B cell (primary cell): ENCODE measurements at regions of chr1 and their contacts with region 1.

Region 1: GRCh38 chr1:12153181-12153785 is 13.5 kb upstream of the TNFRSF1B start:
- DNase-seq: peak; percentile 89
- ATAC-seq: peak; percentile 48
- H3K4me3 ChIP-seq: peak overlapping the region in 1 of 5 experiments; percentile 43
- H3K4me3 Mint-ChIP-seq: peak overlapping the region; percentile 69
- H3K27ac ChIP-seq: peak overlapping the region; percentile 93
- H3K27ac Mint-ChIP-seq: peak overlapping the region; percentile 92
- H3K4me1 ChIP-seq: peaks cover 74 to 91% of the 10 kb centered on the region in 2 donors
- H3K4me1 Mint-ChIP-seq: peaks cover 85% of the 10 kb centered on the region
- H3K27me3 ChIP-seq: no peaks in the 10 kb centered on the region
- H3K27me3 Mint-ChIP-seq: no peaks in the 10 kb centered on the region
- CTCF ChIP-seq: no peak

Region 2: GRCh38 chr1:12095452-12096263 is 57.6 kb before region 1 on chr1:
- CTCF ChIA-PET with region 1: no interaction called
- POLR2A ChIA-PET with region 1: no interaction called
- intact Hi-C with region 1: no loop called
- DNase-seq: no peak
- ATAC-seq: no peak
- H3K4me3 ChIP-seq: no peak overlapping the region
- H3K4me3 Mint-ChIP-seq: no peak overlapping the region
- H3K27ac ChIP-seq: no peak overlapping the region
- H3K27ac Mint-ChIP-seq: no peak overlapping the region
- H3K4me1 ChIP-seq: no peaks in the 10 kb centered on the region
- H3K4me1 Mint-ChIP-seq: peaks cover under 1% of the 10 kb centered on the region
- H3K27me3 ChIP-seq: no peaks in the 10 kb centered on the region
- H3K27me3 Mint-ChIP-seq: no peaks in the 10 kb centered on the region
- CTCF ChIP-seq: no peak

Region 3: DNA sequence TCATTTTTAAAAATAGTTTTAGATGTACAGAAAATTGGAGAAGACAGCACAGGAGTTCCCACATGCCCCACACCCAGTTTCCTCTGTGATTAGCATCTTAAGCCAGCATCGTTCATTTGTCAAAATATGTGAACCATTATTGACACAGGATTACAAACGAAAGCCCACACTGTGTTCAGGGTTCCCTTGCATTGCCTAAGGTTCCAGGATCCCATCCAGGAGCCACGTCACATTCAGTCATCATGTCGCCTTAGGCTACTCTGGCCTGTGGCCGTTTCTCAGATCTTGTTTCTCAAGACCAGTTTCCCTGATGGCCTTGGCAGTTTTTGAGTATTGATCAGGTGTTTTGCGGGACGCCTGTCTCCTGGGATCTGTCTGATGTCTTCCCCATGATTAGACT is 21.2 kb before region 1 on chr1:
- CTCF ChIA-PET with region 1: interaction called, 169 read pairs
- POLR2A ChIA-PET with region 1: interaction called, 7 read pairs
- intact Hi-C with region 1: loop called (anchors 2 kb)
- DNase-seq: no peak
- ATAC-seq: no peak
- H3K4me3 ChIP-seq: no peak overlapping the region
- H3K4me3 Mint-ChIP-seq: peak overlapping the region; percentile 16
- H3K27ac ChIP-seq: peak overlapping the region; percentile 76 to 81
- H3K27ac Mint-ChIP-seq: peak overlapping the region; percentile 56
- H3K4me1 ChIP-seq: peaks cover 18 to 38% of the 10 kb centered on the region in 2 donors
- H3K4me1 Mint-ChIP-seq: peaks cover 34% of the 10 kb centered on the region
- H3K27me3 ChIP-seq: no peaks in the 10 kb centered on the region
- H3K27me3 Mint-ChIP-seq: no peaks in the 10 kb centered on the region
- CTCF ChIP-seq: no peak

Region 4: DNA sequence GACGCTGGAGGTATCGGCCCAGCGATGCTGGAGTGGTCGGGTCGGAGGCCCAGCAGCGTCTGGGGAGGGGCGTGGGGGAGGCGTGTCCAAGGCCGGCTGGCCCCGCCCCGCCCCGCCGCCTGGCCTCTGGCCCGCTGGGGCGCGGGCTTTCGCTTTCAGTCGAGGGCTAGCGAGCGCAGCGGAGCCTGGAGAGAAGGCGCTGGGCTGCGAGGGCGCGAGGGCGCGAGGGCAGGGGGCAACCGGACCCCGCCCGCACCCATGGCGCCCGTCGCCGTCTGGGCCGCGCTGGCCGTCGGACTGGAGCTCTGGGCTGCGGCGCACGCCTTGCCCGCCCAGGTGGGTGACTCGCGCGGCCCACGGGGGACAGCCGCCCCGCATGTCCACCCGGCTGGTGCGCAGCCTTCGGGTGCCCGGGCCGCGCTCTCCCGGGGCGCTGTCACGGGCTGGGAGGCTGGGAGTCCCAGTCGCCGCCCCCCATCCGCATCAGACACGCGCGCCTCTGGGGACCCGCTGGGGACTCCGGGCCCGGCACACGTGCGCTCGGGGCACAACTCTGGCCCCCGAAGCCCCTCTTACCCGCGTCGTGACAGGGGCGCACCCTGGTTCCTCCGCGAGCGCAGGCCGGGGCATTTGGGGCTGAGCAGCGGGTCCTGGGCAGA is 13.7 kb after region 1 on chr1 and contains the start of gene TNFRSF1B:
- CTCF ChIA-PET with region 1: interaction called, 16 read pairs
- POLR2A ChIA-PET with region 1: interaction called, 17 read pairs
- intact Hi-C with region 1: loop called (anchors 1 kb)
- DNase-seq: peak; percentile 81
- ATAC-seq: peak; percentile 76
- H3K4me3 ChIP-seq: peak within 1 kb of the TSS; percentile 69 to 80 (median 79)
- H3K4me3 Mint-ChIP-seq: peak within 1 kb of the TSS; percentile 98
- H3K27ac ChIP-seq: peak within 1 kb of the TSS; percentile 55 to 71
- H3K27ac Mint-ChIP-seq: peak within 1 kb of the TSS; percentile 94
- H3K4me1 ChIP-seq: peaks cover 25 to 52% of the 10 kb centered on the region in 2 donors
- H3K4me1 Mint-ChIP-seq: peaks cover 61% of the 10 kb centered on the region
- H3K27me3 ChIP-seq: no peaks in the 10 kb centered on the region
- H3K27me3 Mint-ChIP-seq: no peaks in the 10 kb centered on the region
- CTCF ChIP-seq: no peak
- total RNA-seq, gene TNFRSF1B: 86.6 and 99.4 TPM in 2 replicates

Region 5: DNA sequence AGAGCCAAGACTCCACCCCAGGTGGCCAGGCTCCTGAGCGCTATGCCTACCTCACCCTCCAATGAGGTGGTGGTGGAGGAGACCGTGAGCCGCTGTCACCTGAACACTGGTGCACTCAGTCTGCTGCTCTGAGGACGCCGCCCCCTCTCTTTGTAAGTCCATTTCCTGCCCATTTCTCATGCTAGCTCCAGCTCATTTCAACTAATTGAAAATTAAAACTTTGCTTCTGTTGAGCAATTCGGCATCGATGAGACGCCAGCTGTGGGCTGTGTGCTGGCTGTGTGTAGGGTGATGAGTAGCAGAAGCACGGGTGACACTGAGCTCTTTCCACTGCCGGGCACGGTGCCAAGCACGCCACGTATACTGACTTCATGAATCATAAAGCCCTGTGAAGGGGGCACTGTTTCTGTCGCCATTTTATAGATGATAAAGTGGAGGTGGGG is 24.7 kb after region 1 on chr1:
- CTCF ChIA-PET with region 1: interaction called, 12 read pairs
- POLR2A ChIA-PET with region 1: interaction called, 6 read pairs
- intact Hi-C with region 1: no loop called
- DNase-seq: no peak
- ATAC-seq: no peak
- H3K4me3 ChIP-seq: no peak overlapping the region
- H3K4me3 Mint-ChIP-seq: peak overlapping the region; percentile 59
- H3K27ac ChIP-seq: peak overlapping the region in 1 of 2 donors; percentile 10
- H3K27ac Mint-ChIP-seq: peak overlapping the region; percentile 27
- H3K4me1 ChIP-seq: peaks cover 45 to 82% of the 10 kb centered on the region in 2 donors
- H3K4me1 Mint-ChIP-seq: peaks cover 79% of the 10 kb centered on the region
- H3K27me3 ChIP-seq: no peaks in the 10 kb centered on the region
- H3K27me3 Mint-ChIP-seq: no peaks in the 10 kb centered on the region
- CTCF ChIP-seq: no peak

Region 6: DNA sequence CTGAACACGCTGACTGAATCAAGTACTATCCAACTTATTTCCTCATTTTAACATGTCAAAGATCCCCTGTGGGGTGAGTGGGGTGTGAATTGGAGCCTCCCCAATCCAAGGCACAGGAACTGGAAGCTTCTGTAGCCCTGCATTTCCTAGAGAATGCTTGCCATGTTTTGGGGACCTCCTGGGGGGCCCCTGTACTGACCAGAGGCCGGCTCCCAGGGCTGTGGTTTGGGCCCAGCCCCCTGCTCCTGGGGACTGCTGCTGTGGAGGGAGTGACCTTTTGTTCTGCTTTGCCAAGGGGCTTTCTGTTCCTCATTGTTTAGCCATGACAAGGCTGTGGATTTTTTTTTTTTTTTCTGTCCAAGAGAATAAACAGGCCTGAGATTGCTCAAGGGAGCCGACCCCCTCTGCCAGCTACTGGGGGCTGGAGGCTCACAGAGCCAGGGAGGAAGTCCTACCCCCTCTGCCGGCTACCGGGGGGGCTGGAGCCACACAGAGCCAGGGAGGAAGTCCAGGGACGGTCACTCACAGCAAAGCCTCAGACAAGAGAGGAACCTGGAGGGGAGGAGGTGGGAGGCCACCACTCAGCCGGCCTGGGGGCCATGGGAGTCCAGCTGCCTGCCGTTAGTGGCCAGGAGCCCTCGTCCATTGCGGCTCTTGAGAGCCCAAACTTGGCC is 30.9 kb after region 1 on chr1:
- CTCF ChIA-PET with region 1: interaction called, 12 read pairs
- POLR2A ChIA-PET with region 1: interaction called, 4 read pairs
- intact Hi-C with region 1: loop called (anchors 2 kb)
- DNase-seq: peak; percentile 60
- ATAC-seq: peak; percentile 67
- H3K4me3 ChIP-seq: no peak overlapping the region
- H3K4me3 Mint-ChIP-seq: peak overlapping the region; percentile 67
- H3K27ac ChIP-seq: peak overlapping the region; percentile 26 to 43
- H3K27ac Mint-ChIP-seq: peak overlapping the region; percentile 87
- H3K4me1 ChIP-seq: peaks cover 25 to 62% of the 10 kb centered on the region in 2 donors
- H3K4me1 Mint-ChIP-seq: peaks cover 64% of the 10 kb centered on the region
- H3K27me3 ChIP-seq: no peaks in the 10 kb centered on the region
- H3K27me3 Mint-ChIP-seq: no peaks in the 10 kb centered on the region
- CTCF ChIP-seq: peak; percentile 24